ENCODE measurements at regions of chr3 and their contacts with region 1.

Region 1: DNA sequence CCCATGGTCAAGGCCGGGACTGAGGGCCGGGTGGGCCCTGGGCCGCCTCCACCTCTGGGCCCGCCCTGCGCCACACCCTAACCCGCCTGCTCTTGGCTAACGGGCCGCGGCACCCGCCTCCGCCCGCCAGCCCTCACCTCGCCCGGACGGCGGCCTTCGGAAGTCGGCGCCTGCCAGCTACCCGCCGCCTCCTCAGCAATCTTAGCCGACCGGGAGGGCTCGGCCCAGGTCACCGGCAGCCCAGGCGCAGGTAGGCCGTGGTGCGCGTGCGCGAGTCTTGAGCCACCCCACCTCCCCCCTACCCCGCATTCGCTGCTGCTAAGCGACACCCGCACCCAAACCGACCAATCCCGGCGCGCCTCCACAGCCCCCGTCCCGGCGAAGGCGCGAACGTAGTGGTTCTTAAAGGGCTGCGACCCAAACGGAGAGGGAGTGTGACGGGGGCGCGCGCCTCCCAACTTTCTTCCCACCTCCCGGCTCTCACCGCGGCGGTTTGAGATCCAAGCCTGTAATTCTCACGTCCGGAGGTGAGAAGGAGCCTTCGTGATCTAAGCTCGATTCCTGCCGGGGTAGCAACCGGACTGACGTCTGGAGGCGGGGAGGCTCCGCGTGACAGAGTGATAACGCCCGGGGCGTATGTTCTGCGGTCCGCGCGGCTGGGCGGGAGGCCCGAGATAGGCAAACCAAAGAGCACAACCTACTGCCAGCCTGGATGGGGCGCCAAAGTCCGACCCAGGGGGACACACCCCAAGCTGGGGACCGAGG is at the start of gene SEC22C:
- DNase-seq: peak; percentile 92
- ATAC-seq: peak; percentile 92
- H3K4me3 Mint-ChIP-seq: peak within 1 kb of the TSS; percentile 94
- H3K27ac Mint-ChIP-seq: peak within 1 kb of the TSS; percentile 97
- H3K4me1 Mint-ChIP-seq: peaks cover 29% of the 10 kb centered on the region
- H3K27me3 Mint-ChIP-seq: no peaks in the 10 kb centered on the region
- CTCF ChIP-seq: no peak
- total RNA-seq, gene SEC22C: 36.4 and 38.3 TPM in 2 replicates

Region 2: DNA sequence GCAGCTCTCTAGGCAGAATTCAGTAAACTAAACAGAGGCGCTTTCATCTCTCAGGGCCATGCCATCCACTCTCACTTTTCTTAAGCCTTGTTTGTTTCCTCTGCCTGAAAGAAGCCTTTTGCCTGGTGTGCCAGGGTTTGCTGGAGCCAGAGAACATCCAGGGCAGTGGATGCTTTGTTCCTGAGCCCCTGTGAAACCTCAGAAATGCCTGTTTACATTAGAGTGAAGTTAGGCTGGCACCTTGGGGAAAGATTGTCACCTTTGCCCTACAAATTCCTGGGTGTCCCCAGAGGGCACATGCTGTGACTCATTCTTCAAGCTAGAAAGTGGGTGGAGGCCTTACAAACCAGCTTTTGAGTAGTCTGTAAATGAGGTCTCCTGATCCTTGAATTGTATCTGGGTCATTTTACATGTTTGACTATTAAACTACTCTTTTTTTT is 501.4 kb before region 1 on chr3:
- CTCF ChIA-PET with region 1: no interaction called
- POLR2A ChIA-PET with region 1: no interaction called
- intact Hi-C with region 1: loop called (anchors 5 kb)
- DNase-seq: peak; percentile 51
- ATAC-seq: peak; percentile 94
- H3K4me3 Mint-ChIP-seq: peak overlapping the region; percentile 74
- H3K27ac Mint-ChIP-seq: peak overlapping the region; percentile 97
- H3K4me1 Mint-ChIP-seq: peaks cover 85% of the 10 kb centered on the region
- H3K27me3 Mint-ChIP-seq: no peaks in the 10 kb centered on the region
- CTCF ChIP-seq: no peak

Region 3: DNA sequence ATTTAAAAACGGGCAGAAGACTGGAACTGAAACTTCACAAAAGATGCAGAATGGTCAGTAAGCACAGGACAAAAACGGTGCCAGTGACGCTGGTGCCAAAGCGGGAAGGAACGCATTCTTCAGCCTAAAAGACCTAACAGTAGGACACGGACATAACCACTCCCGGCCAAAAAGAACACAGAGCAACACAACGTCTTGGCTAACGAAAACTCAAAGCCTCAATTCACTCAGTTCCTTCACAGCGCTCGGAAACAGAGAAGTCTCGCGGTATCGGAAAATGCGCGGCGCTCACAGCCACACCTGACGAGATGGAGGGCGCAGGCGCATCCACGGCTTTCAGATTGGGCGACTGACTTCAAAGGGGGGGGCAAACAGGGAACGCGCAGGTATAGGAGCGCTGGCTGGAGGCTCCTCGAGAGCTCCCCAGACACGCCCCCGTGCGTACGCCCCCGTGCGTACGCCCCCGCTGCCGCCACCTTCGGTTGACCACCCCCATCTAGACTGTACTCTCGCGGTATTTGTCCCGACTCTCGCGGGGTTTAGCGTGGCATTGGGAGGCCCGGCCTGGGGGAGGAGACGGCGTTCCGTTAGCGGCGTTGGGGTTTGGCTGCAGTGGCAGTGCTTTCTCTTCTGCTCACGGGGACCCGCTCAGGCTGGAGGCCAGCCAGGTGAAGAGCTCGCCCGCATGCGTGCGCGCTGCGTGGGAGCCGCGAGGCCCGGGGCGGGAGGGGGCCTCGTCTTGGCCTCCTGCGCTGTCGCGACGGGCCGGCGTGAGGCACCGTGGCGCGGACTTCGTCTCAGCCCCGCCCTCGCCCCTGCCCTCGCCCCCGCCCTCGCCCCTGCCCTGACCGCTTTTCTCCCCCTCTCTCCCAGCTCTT is 18.5 kb after region 1 on chr3 and contains the start of gene NKTR:
- CTCF ChIA-PET with region 1: interaction called, 3 read pairs
- POLR2A ChIA-PET with region 1: interaction called, 50 read pairs
- intact Hi-C with region 1: loop called (anchors 1 kb)
- DNase-seq: peak; percentile 98
- ATAC-seq: peak; percentile 92
- H3K4me3 Mint-ChIP-seq: peak within 1 kb of the TSS; percentile 91
- H3K27ac Mint-ChIP-seq: peak within 1 kb of the TSS; percentile 96
- H3K4me1 Mint-ChIP-seq: peaks cover 34% of the 10 kb centered on the region
- H3K27me3 Mint-ChIP-seq: no peaks in the 10 kb centered on the region
- CTCF ChIP-seq: no peak
- total RNA-seq, gene NKTR: 107 and 126 TPM in 2 replicates

Region 4: GRCh38 chr3:42613462-42613861 is 31.6 kb after region 1 on chr3:
- CTCF ChIA-PET with region 1: interaction called, 5 read pairs
- POLR2A ChIA-PET with region 1: interaction called, 5 read pairs
- intact Hi-C with region 1: loop called (anchors 2 kb)
- DNase-seq: no peak
- ATAC-seq: peak; percentile 44
- H3K4me3 Mint-ChIP-seq: no peak overlapping the region
- H3K27ac Mint-ChIP-seq: peak overlapping the region; percentile 67
- H3K4me1 Mint-ChIP-seq: peaks cover 41% of the 10 kb centered on the region
- H3K27me3 Mint-ChIP-seq: no peaks in the 10 kb centered on the region
- CTCF ChIP-seq: no peak

Region 5: DNA sequence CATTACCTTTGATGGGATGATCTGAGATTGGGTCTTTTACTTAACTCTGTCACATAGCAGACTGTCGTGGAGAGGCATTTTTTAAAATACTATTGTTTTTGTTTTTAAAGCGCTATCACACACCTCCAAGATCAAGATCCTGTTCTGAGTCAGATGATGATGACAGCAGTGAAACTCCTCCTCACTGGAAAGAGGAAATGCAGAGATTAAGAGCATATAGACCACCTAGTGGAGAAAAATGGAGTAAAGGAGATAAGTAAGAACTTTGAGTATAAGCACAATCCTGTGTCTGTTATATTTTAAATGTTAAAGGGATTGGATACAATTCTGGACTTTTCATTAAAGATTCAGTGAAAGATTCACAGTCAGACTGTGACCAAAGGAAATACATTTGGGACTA is 53.2 kb after region 1 on chr3:
- CTCF ChIA-PET with region 1: interaction called, 3 read pairs
- POLR2A ChIA-PET with region 1: no interaction called
- intact Hi-C with region 1: loop called (anchors 1 kb)
- DNase-seq: no peak
- ATAC-seq: peak; percentile 88
- H3K4me3 Mint-ChIP-seq: no peak overlapping the region
- H3K27ac Mint-ChIP-seq: no peak overlapping the region
- H3K4me1 Mint-ChIP-seq: peaks cover 3% of the 10 kb centered on the region
- H3K27me3 Mint-ChIP-seq: no peaks in the 10 kb centered on the region
- CTCF ChIP-seq: no peak

Region 6: GRCh38 chr3:42749753-42750231 is 167.9 kb after region 1 on chr3:
- CTCF ChIA-PET with region 1: interaction called, 9 read pairs
- POLR2A ChIA-PET with region 1: no interaction called
- intact Hi-C with region 1: loop called (anchors 2 kb)
- DNase-seq: no peak
- ATAC-seq: no peak
- H3K4me3 Mint-ChIP-seq: no peak overlapping the region
- H3K27ac Mint-ChIP-seq: no peak overlapping the region
- H3K4me1 Mint-ChIP-seq: peaks cover 5% of the 10 kb centered on the region
- H3K27me3 Mint-ChIP-seq: no peaks in the 10 kb centered on the region
- CTCF ChIP-seq: no peak

Region 7: DNA sequence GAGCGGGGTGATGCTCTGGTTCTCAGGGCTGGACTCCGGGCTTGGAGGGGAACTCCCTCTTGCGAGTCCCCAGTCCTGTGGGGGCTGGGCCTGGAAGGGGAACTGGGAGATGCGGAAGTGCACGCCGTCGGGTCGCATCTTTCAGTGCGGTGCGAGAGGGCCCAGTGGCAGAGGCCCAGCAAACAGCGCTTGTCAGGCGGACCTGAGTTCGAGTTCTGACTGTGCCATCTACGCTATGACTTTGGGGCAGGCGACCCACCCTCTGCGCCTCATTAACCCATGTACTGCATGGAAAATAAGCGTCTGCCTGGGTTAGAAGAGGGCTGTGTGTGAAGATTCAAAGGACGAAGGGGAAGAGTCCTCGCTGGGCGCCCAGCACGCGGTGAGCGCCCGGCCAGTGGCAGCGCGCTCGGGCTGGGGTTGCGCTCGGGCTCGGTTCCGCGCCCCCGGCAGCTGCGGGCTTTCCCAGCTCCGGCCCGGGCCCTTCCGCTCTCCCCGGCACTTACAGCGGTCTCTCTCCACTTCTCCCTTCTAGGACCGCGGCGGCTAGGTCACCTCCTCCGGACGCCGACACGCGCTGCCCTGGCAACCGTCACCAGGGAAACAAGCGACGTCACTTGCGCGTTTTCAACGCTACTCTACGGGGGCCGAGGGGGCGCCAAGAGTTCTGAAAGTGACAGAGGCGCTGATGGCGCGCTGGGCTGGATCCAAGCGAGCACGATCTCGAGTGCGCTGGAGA is 190.9 kb after region 1 on chr3 and contains the start of gene CCDC13:
- CTCF ChIA-PET with region 1: no interaction called
- POLR2A ChIA-PET with region 1: no interaction called
- intact Hi-C with region 1: loop called (anchors 1 kb)
- DNase-seq: peak; percentile 97
- ATAC-seq: peak; percentile 90
- H3K4me3 Mint-ChIP-seq: peak within 1 kb of the TSS; percentile 90
- H3K27ac Mint-ChIP-seq: peak within 1 kb of the TSS; percentile 89
- H3K4me1 Mint-ChIP-seq: peaks cover 13% of the 10 kb centered on the region
- H3K27me3 Mint-ChIP-seq: no peaks in the 10 kb centered on the region
- CTCF ChIP-seq: no peak
- total RNA-seq, gene CCDC13: 1.7 and 1.9 TPM in 2 replicates